ENCODE measurements at regions of chr13 and their contacts with region 1.

Region 1: GRCh38 chr13:23600534-23600933 is 30.3 kb downstream of the TNFRSF19 start:
- DNase-seq: no peak
- H3K4me3 ChIP-seq: no peak overlapping the region
- H3K27ac ChIP-seq: no peak overlapping the region
- H3K4me1 ChIP-seq: no peaks in the 10 kb centered on the region
- CTCF ChIP-seq: no peak

Region 2: GRCh38 chr13:23654111-23655110 is 53.9 kb after region 1 on chr13:
- CTCF ChIA-PET with region 1: no interaction called
- POLR2A ChIA-PET with region 1: no interaction called
- intact Hi-C with region 1: loop called (anchors 5 kb)
- DNase-seq: no peak
- H3K4me3 ChIP-seq: no peak overlapping the region
- H3K27ac ChIP-seq: no peak overlapping the region
- H3K4me1 ChIP-seq: no peaks in the 10 kb centered on the region
- CTCF ChIP-seq: no peak

Region 3: DNA sequence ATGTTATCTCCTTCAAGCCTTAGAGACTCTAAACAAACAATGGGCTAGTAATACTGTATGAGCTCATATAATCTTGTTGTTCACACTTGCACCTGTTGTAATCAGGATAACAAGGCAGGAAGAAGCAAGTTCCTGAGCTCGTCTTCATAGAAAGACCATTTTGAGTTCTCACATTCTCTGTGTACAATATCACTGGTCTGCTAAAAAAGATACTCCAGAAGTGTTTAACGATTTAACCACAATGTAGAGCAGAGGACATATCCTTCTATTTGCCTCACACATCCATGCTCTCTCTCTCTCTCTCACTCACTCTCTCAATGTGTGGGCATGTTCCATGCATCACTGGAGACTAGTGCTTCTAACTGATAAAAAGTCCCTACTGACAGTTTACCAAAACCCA is 165.7 kb after region 1 on chr13:
- CTCF ChIA-PET with region 1: no interaction called
- POLR2A ChIA-PET with region 1: no interaction called
- intact Hi-C with region 1: no loop called
- DNase-seq: peak; percentile 15
- H3K4me3 ChIP-seq: no peak overlapping the region
- H3K27ac ChIP-seq: no peak overlapping the region
- H3K4me1 ChIP-seq: peaks cover 23% of the 10 kb centered on the region
- CTCF ChIP-seq: no peak